Activated B cell treated with CpG ODN at 0.5 μM for 24 hours (primary cell): ENCODE measurements at regions of chr2 and their contacts with region 1.

Region 1: DNA sequence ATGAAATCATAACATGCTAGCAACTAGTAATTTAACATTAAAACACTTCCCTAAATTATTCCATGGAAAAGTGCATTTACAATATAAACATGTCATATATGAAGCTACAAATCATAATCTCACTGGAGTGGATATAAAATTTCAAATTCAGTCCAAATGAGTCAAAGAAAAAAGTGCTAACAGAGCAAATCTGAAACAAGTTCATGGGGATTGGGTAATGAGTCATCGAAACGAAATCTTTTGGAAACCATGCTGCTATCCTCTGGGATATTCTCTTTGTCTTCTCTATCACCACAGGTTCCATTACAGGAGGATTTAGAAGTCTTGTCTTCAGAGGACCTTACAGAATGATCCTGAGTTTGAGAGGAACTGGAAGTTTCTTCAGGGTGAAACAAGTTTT is 34.1 kb downstream of the STK17B start:
- DNase-seq: no peak
- ATAC-seq: no peak
- H3K4me3 Mint-ChIP-seq: no peak overlapping the region
- H3K27ac Mint-ChIP-seq: peak overlapping the region; percentile 36
- H3K4me1 Mint-ChIP-seq: peaks cover 10% of the 10 kb centered on the region
- H3K27me3 Mint-ChIP-seq: no peaks in the 10 kb centered on the region
- CTCF ChIP-seq: no peak

Region 2: DNA sequence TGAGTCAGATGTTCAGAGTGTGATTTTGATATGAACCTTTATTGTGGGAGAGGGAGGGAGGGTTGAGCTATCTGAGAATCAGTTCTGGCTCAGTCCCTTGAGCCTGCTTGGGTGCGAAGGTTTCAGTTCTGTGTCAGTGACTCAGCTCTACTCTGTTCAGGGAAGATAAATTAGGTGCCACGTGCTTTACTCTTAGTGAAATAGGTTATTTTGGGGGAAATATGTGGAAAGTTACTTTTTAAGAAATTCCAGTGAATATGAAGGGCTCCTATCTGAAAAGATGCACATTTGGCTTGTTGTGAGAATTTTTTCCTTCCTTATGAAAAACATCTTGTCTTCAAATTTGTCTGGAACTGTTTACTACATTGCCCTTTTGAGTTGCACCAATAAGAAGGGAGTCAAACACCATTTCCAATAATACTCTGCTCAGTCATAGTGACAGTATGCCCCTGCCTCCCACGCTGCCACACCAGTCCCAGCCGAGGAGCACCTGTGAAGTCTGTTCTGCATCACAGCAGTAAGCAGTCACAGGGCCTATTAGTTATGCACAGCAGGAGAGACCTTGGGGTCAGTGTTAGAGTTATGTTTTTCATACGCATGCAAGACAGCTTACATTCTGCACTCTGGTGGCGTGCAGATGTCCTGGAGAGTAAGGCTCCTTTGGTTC is 35.8 kb before region 1 on chr2:
- CTCF ChIA-PET with region 1: interaction called, 3 read pairs
- POLR2A ChIA-PET with region 1: interaction called, 16 read pairs
- intact Hi-C with region 1: loop called (anchors 2 kb)
- DNase-seq: peak; percentile 34
- ATAC-seq: peak; percentile 87
- H3K4me3 Mint-ChIP-seq: peak overlapping the region; percentile 40
- H3K27ac Mint-ChIP-seq: peak overlapping the region; percentile 81
- H3K4me1 Mint-ChIP-seq: peaks cover 77% of the 10 kb centered on the region
- H3K27me3 Mint-ChIP-seq: no peaks in the 10 kb centered on the region
- CTCF ChIP-seq: no peak

Region 3: GRCh38 chr2:196149948-196150347 is 12.7 kb after region 1 on chr2:
- CTCF ChIA-PET with region 1: interaction called, 3 read pairs
- POLR2A ChIA-PET with region 1: interaction called, 8 read pairs
- intact Hi-C with region 1: loop called (anchors 1 kb)
- DNase-seq: no peak
- ATAC-seq: peak; percentile 71
- H3K4me3 Mint-ChIP-seq: peak overlapping the region; percentile 70
- H3K27ac Mint-ChIP-seq: peak overlapping the region; percentile 93
- H3K4me1 Mint-ChIP-seq: peaks cover 78% of the 10 kb centered on the region
- H3K27me3 Mint-ChIP-seq: no peaks in the 10 kb centered on the region
- CTCF ChIP-seq: no peak

Region 4: GRCh38 chr2:197229509-197230443 is 1092.5 kb after region 1 on chr2:
- CTCF ChIA-PET with region 1: no interaction called
- POLR2A ChIA-PET with region 1: interaction called, 17 read pairs
- intact Hi-C with region 1: no loop called
- DNase-seq: no peak
- ATAC-seq: no peak
- H3K4me3 Mint-ChIP-seq: no peak overlapping the region
- H3K27ac Mint-ChIP-seq: peak overlapping the region; percentile 42
- H3K4me1 Mint-ChIP-seq: peaks cover 94% of the 10 kb centered on the region
- H3K27me3 Mint-ChIP-seq: no peaks in the 10 kb centered on the region
- CTCF ChIP-seq: no peak